Endothelial cell of umbilical vein (primary cell): ENCODE measurements at regions of chr7 and their contacts with region 1.

Region 1: GRCh38 chr7:137579913-137580640 is 236.5 kb upstream of the PTN start:
- DNase-seq: peak; percentile 90
- H3K4me3 ChIP-seq: peak overlapping the region in 1 of 3 experiments; percentile 25
- H3K27ac ChIP-seq: peak overlapping the region; percentile 92
- H3K4me1 ChIP-seq: peaks cover 23% of the 10 kb centered on the region
- H3K27me3 ChIP-seq: no peaks in the 10 kb centered on the region
- CTCF ChIP-seq: no peak
- POLR2A ChIP-seq: no peak

Region 2: DNA sequence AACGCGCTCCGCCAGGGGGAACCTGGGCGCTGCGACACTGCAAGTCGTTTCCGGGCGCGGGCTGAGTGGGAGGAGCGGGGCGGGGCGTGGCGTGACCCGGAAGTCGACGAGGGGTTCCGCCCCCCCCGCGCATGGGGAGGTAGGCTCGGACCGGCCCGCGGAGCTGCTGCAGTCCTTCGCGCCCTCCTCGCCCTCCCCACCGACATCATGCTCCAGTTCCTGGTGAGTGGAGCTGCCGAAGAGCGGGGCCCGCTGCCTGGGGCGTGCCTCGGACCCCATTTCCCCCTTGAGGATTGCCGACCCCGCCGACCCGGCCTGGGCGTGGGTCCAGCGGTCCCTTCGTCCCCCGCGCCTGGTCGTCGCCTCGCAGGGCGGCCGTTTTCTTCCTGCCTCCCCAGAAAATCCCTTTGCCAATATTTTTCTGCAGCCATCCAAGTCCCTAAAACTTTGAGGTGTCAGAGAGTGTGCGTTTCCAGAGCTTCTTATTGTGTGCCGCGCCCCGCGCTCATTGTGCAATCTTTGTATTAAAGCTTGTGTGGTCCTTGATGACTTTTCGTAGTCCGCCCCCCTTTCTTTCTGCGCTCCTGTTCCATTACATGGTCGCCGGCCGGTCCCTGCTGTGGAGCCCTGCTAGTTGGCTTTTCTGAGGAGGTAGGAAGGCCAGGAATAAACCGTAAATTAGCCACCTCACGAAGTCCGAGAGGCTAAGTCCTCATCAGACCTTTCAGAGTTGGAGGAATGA is 1917.5 kb before region 1 on chr7 and contains the start of gene STMP1:
- CTCF ChIA-PET with region 1: no interaction called
- POLR2A ChIA-PET with region 1: no interaction called
- dilution Hi-C with region 1: no loop called
- intact Hi-C with region 1: loop called (anchors 10 kb)
- DNase-seq: peak; percentile 95
- H3K4me3 ChIP-seq: peak within 1 kb of the TSS; percentile 68 to 91 (median 86)
- H3K27ac ChIP-seq: peak within 1 kb of the TSS; percentile 91
- H3K4me1 ChIP-seq: peaks cover 36% of the 10 kb centered on the region
- H3K27me3 ChIP-seq: no peaks in the 10 kb centered on the region
- CTCF ChIP-seq: peak in 1 of 2 donors; percentile 77
- POLR2A ChIP-seq: peak; percentile 96
- total RNA-seq, gene STMP1: 21.4 and 31.3 TPM in 2 replicates

Region 3: GRCh38 chr7:137081321-137082093 is 498.6 kb before region 1 on chr7:
- CTCF ChIA-PET with region 1: no interaction called
- POLR2A ChIA-PET with region 1: no interaction called
- dilution Hi-C with region 1: no loop called
- intact Hi-C with region 1: no loop called
- DNase-seq: no peak
- H3K4me3 ChIP-seq: no peak overlapping the region
- H3K27ac ChIP-seq: no peak overlapping the region
- H3K4me1 ChIP-seq: no peaks in the 10 kb centered on the region
- H3K27me3 ChIP-seq: no peaks in the 10 kb centered on the region
- CTCF ChIP-seq: no peak
- POLR2A ChIP-seq: no peak

Region 4: DNA sequence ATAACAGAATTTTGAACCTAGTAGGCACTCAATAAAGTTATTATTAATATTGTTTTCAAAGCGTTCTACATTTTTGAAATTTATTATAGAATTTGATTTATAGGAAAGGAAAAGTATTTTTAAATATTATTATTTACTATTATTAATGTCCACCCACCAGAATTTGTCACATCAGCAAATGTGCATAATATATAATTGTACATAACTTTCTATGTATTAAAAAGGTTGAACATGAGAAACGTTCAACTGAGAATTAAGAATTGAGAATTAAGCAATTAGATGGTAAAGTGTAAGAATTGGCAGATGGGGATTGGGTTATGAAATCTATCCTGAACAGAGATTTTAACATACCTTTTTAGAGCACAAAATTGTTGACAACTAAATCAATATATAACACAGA is 366.3 kb before region 1 on chr7:
- CTCF ChIA-PET with region 1: no interaction called
- POLR2A ChIA-PET with region 1: no interaction called
- dilution Hi-C with region 1: no loop called
- intact Hi-C with region 1: no loop called
- DNase-seq: no peak
- H3K4me3 ChIP-seq: no peak overlapping the region
- H3K27ac ChIP-seq: no peak overlapping the region
- H3K4me1 ChIP-seq: no peaks in the 10 kb centered on the region
- H3K27me3 ChIP-seq: no peaks in the 10 kb centered on the region
- CTCF ChIP-seq: no peak
- POLR2A ChIP-seq: no peak

Region 5: GRCh38 chr7:137513091-137513490 is 67.0 kb before region 1 on chr7:
- CTCF ChIA-PET with region 1: no interaction called
- POLR2A ChIA-PET with region 1: no interaction called
- dilution Hi-C with region 1: no loop called
- intact Hi-C with region 1: loop called (anchors 1 kb)
- DNase-seq: no peak
- H3K4me3 ChIP-seq: no peak overlapping the region
- H3K27ac ChIP-seq: no peak overlapping the region
- H3K4me1 ChIP-seq: peaks cover 13% of the 10 kb centered on the region
- H3K27me3 ChIP-seq: no peaks in the 10 kb centered on the region
- CTCF ChIP-seq: no peak
- POLR2A ChIP-seq: no peak

Region 6: GRCh38 chr7:137538361-137538762 is 41.7 kb before region 1 on chr7:
- CTCF ChIA-PET with region 1: no interaction called
- POLR2A ChIA-PET with region 1: no interaction called
- dilution Hi-C with region 1: no loop called
- intact Hi-C with region 1: no loop called
- DNase-seq: no peak
- H3K4me3 ChIP-seq: no peak overlapping the region
- H3K27ac ChIP-seq: no peak overlapping the region
- H3K4me1 ChIP-seq: no peaks in the 10 kb centered on the region
- H3K27me3 ChIP-seq: no peaks in the 10 kb centered on the region
- CTCF ChIP-seq: no peak
- POLR2A ChIP-seq: no peak

Region 7: DNA sequence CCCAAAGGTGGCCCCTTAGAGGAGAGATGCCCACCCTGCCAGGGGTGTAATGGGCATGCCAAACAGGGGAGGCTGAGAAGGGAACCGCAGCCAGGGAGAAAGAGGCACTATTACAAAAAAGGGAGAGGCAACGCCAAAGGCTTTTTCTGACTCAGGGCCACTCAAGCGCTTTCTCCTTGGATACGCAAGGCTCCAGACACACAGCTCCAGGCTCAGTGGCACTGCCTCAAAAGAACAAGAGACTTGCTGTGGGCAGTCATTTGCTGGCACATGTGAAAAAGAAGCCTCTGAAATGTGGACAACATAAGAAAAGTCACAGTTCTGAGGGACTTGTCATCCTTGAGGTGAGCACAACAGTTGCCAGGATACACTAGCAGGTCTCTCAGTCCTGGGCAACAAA is 138.3 kb after region 1 on chr7:
- CTCF ChIA-PET with region 1: no interaction called
- POLR2A ChIA-PET with region 1: no interaction called
- dilution Hi-C with region 1: no loop called
- intact Hi-C with region 1: no loop called
- DNase-seq: no peak
- H3K4me3 ChIP-seq: no peak overlapping the region
- H3K27ac ChIP-seq: no peak overlapping the region
- H3K4me1 ChIP-seq: no peaks in the 10 kb centered on the region
- H3K27me3 ChIP-seq: peaks cover 0 to under 1% of the 10 kb centered on the region in 2 experiments
- CTCF ChIP-seq: no peak
- POLR2A ChIP-seq: no peak